ENCODE measurements at regions of chr17 and their contacts with region 1.

Region 1: GRCh38 chr17:63082273-63082993 is 116.4 kb downstream of the TANC2 start:
- DNase-seq: no peak
- ATAC-seq: no peak
- H3K4me3 Mint-ChIP-seq: no peak overlapping the region
- H3K27ac Mint-ChIP-seq: no peak overlapping the region
- H3K4me1 Mint-ChIP-seq: peaks cover under 1% of the 10 kb centered on the region; the same call in 1 of the 2 replicates
- H3K27me3 Mint-ChIP-seq: no peaks in the 10 kb centered on the region
- CTCF ChIP-seq: no peak

Region 2: DNA sequence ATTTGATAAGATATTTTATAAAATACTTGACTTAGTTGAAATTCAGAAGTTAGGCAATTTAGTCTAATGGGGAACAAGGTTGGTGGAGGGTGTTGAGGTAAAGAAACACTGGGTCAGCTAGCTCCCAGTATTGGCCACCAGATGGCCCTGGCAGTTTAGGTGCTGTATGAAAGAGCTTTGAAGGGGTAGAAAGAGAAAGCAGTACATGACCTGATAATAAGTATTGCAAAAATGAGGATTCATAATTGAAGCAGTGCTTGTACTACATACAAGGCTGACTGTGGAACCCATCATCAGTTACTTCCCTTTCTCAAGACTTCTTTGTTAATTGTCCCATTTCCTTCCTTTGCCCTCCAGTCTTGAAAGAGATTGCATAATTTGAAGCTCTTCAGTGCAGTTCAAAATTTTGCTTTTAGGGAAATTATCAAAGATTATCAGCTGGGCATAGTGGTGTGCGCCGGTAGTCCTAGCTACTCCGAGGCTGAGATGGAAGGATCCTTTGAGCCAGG is 87.0 kb before region 1 on chr17:
- CTCF ChIA-PET with region 1: interaction called, 12 read pairs
- POLR2A ChIA-PET with region 1: no interaction called
- DNase-seq: peak; percentile 38
- ATAC-seq: peak; percentile 89
- H3K4me3 Mint-ChIP-seq: no peak overlapping the region
- H3K27ac Mint-ChIP-seq: no peak overlapping the region
- H3K4me1 Mint-ChIP-seq: peaks cover 2% of the 10 kb centered on the region; the same call in 1 of the 2 replicates
- H3K27me3 Mint-ChIP-seq: no peaks in the 10 kb centered on the region
- CTCF ChIP-seq: no peak

Region 3: DNA sequence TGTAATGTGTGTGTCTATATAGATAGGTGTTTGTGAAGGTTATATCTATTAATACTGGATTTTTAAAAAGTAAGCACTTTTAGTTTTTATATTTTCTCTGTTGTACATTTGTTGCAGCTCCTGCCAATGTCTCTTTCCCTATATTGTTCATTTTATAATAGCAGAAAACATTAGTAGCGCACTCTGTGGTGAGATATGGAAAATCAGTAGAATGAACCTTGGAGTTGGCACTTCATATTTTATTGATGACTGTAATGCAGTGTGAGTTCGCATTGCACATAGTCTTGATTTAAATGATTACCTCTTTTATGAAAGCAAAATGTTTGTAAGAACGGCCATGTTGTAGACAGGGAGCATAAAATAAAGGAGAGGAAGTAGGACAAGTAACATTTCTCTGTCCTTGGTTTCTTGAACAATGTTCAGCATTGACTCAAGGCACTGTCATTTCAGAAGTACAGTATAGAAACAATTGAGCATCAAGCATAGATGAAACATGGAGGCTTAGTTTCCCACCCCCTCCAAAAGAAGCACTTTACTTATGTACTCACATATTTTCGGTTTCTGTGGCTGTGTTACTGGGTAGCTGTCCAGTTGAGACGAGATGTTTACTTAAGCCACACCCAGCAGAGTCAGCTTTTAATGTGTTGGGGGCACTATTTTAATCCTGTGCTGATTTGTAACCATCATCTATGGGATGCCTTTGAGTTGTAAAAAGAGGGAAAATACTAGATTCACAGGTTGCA is 42.4 kb before region 1 on chr17:
- CTCF ChIA-PET with region 1: no interaction called
- POLR2A ChIA-PET with region 1: no interaction called
- DNase-seq: no peak
- ATAC-seq: no peak
- H3K4me3 Mint-ChIP-seq: no peak overlapping the region
- H3K27ac Mint-ChIP-seq: no peak overlapping the region
- H3K4me1 Mint-ChIP-seq: peaks cover 36% of the 10 kb centered on the region
- H3K27me3 Mint-ChIP-seq: no peaks in the 10 kb centered on the region
- CTCF ChIP-seq: no peak

Measured in WTC11 (cell line).